ENCODE measurements at regions of chr5 and their contacts with region 1.

Region 1: DNA sequence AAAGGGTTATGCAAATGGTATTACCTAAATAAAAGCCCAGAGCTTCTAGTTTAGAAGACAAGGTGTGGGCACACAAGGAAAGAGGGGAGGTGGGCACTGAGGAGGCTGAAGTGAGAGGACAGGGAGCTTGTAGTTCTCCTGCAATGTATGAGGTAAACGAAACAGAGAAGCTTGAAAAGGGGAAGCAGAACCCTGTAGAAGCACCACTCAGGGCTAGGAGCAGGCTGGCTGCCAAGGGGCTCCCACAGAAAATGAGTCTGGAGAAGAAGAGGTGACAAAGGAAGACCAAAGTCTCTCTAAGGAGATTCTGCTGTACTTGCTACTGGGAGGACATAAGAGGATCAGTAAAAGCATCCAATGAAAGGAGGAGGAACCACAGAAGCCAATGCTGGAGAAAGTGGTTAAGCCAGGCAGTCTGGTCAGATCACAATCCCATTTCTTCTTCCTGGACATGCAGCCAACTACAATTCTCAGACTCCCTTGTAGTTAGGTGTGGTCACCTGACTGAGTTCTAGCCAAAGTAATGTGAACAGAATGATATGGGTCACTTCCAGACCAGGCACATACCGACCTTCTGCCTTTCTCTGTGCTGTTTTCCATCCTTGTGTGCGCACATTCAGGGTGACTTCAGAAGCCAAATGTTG is 174.5 kb upstream of the MAP3K1 start:
- DNase-seq: no peak
- H3K4me3 ChIP-seq: no peak overlapping the region
- H3K27ac ChIP-seq: no peak overlapping the region
- H3K4me1 ChIP-seq: peaks cover 22% of the 10 kb centered on the region
- H3K27me3 ChIP-seq: no peaks in the 10 kb centered on the region
- CTCF ChIP-seq: no peak
- POLR2A ChIP-seq: no peak

Region 2: DNA sequence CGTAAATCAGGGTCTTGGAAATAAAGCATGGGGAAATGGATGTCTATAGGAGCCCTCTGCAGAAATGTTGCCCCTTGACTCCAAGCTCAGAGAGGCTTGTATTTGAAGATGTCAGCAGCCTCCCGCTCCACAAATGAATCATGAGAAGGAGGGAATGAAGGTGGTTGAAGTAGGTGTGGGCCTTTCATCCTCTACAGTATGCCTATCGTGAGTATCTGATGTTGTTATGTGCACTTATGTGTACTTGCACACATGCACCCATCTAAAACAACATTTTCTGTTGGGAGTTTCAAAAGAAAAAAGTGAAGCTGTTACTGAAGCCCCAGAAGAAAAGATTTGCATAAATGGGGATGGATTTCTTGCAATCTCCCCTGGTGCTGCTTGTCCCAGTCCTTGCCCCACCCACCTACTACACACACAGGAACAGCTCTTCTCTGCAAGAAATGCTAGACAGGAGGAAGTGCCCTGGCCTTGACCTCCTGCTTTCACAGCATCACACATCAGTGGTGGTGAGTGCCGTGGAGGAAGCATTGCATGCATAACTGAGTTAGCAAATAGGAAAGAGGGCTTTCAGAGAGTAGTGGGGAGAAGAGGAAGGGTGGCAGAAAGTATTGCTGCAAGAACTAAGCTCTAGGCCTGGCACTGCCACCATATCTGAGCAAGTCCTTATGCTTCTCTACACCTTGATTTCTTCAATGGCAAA is 1967.2 kb before region 1 on chr5:
- intact Hi-C with region 1: no loop called
- DNase-seq: peak in 1 of 2 donors; percentile 82
- H3K4me3 ChIP-seq: no peak overlapping the region
- H3K27ac ChIP-seq: no peak overlapping the region
- H3K4me1 ChIP-seq: peaks cover 14% of the 10 kb centered on the region
- H3K27me3 ChIP-seq: no peaks in the 10 kb centered on the region
- CTCF ChIP-seq: no peak
- POLR2A ChIP-seq: no peak

Region 3: DNA sequence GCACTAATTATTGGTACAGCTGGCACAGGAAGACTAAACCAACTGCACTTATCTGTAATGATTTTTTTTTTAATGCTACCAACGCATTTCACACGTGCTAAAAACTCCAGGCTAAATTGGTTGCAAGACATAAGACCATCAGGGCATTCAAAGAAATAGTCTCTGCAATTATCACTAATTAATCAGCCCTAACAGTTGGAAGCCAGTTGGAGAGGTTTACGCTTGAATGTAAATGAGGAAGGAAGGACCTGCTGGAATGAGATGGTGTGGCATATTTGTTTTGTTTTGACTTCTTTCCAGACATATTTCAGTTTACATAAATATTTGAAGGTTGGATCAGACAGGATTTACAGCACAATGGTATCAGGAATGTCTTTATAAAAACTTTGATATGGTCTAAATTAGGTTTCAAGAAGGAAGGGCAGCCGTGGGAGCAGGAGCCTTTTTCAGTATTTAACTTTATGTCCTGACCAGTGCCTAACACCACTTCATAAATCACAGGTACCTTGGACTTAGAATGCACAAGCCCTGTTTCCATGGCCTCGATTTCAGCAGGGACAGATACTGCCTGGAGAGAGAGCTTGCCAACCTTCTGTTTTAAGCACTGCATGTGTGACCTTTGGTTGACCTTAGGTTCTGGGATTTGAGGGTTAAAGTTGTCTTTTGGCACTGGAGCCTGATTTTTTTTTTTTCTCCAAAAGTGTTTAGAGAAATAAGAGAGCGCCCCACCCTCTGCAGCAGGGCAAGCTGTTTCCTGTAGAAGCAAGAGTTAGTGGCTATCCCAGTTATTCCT is 25.3 kb before region 1 on chr5:
- intact Hi-C with region 1: loop called (anchors 1 kb)
- DNase-seq: no peak
- H3K4me3 ChIP-seq: no peak overlapping the region
- H3K27ac ChIP-seq: peak overlapping the region; percentile 46
- H3K4me1 ChIP-seq: peaks cover 22% of the 10 kb centered on the region
- H3K27me3 ChIP-seq: no peaks in the 10 kb centered on the region
- CTCF ChIP-seq: no peak
- POLR2A ChIP-seq: no peak